HCT116 (cell line): ENCODE measurements at regions of chr15 and their contacts with region 1.

Region 1: DNA sequence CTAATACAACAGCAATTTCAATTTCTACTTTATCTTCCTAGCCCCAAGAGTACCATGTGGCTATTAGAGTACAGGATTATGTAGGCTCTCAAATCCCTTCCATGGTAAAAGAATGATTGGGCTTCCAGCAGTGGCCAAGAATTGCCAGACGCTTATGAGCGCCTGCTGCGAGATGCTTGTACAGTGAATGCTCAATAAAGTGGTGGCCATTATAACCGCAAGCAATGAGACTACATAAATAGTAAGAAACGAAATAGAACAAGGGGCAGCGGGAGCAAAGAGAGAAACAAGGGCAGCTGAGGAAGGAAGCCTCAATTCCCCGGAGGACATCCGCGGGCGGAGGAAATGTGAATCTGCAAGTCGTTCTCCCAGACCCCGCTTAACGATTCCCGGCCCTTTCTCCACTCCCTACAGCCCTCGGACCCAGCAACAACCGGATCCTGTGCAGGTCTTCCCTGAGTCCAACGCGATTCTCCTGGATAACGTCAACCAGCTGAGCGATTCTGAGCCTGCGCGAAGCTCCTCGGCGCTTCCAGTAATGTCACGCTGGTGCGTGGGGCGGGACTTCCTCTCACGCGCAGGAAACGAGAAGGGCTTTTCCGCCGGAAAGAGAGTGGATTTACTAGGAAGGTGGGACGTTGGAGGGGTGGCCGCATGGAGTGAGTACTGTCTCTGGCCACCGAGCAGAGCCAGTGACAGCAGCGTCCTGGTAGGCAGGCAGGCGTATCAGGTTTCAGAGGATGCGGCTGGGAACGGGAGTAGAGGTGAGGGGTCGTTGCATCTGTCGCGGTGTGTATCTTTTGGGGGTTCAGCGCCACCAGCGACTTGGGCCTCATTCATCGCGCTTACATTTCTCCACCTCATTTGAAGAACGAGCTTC is 40.5 kb upstream of the AP3B2 start:
- DNase-seq: peak; percentile 90
- ATAC-seq: peak; percentile 85
- H3K4me3 ChIP-seq: peak overlapping the region; percentile 72 to 74
- H3K27ac ChIP-seq: peak overlapping the region; percentile 69
- H3K4me1 ChIP-seq: peaks cover 12 to 22% of the 10 kb centered on the region in 2 experiments
- H3K27me3 ChIP-seq: no peaks in the 10 kb centered on the region
- CTCF ChIP-seq: no peak
- POLR2A ChIP-seq: no peak
- RAD21 ChIP-seq: no peak

Region 2: DNA sequence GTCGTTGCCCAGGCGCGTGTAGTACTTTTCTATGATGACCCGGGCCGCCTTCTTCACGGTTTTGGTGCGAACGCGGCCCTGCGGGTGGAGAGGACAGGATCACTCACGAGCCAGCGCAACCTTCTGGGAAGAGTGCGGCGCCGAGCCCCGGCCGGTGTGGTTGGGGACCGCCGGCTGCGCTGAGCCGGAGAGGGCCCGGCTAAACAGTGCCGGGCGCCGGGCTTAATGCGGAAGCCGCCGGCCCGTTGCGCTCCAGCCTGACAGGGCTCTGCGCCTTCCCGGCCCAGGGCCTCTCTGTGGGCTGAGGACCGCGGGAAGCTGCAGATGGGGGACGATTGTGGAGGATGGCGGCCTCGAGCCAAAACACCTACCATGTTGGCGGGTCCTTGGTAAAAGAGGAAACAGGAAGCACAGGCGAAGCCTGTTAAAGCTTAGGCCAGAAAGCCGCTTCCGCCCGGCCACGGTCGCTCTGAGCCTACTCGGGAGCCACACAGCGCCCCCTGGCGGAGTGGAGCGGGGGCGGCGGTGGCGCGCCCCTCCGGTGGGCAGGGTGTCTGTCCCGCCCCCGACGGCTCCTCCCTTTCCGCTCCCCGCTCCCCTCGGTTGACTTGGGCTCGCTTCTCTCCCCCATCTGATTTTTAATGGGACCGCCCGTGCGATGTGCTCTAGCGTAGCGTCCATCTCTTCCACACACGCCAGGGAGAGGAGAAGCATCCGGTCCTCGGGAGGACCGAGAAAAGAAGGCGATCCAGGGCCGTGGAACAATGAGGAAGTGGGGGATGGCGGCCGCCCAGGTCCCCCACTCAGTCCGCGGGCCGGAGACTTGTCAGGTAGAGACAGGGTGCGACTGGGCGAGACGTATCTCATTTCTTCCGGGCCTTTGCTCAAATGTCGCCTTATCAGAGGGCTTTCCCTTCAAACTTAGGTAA is 209.9 kb before region 1 on chr15 and contains the start of gene RPS17:
- CTCF ChIA-PET with region 1: no interaction called
- POLR2A ChIA-PET with region 1: interaction called, 15 read pairs
- RAD21 ChIA-PET with region 1: interaction called in 1 of 2 experiments, 4 read pairs
- intact Hi-C with region 1: loop called (anchors 1 kb)
- DNase-seq: peak; percentile 91
- ATAC-seq: peak; percentile 90
- H3K4me3 ChIP-seq: peak within 1 kb of the TSS; percentile 84 to 100
- H3K27ac ChIP-seq: peak within 1 kb of the TSS; percentile 85
- H3K4me1 ChIP-seq: peaks cover 0 to 18% of the 10 kb centered on the region in 2 experiments; a peak in 3 of 4 replicates
- H3K27me3 ChIP-seq: peaks cover 4% of the 10 kb centered on the region; the same call in 1 of the 2 replicates
- CTCF ChIP-seq: peak; percentile 85 to 97 (median 94)
- POLR2A ChIP-seq: peak; percentile 96
- RAD21 ChIP-seq: peak; percentile 39
- total RNA-seq, gene RPS17: 2,385 TPM

Region 3: DNA sequence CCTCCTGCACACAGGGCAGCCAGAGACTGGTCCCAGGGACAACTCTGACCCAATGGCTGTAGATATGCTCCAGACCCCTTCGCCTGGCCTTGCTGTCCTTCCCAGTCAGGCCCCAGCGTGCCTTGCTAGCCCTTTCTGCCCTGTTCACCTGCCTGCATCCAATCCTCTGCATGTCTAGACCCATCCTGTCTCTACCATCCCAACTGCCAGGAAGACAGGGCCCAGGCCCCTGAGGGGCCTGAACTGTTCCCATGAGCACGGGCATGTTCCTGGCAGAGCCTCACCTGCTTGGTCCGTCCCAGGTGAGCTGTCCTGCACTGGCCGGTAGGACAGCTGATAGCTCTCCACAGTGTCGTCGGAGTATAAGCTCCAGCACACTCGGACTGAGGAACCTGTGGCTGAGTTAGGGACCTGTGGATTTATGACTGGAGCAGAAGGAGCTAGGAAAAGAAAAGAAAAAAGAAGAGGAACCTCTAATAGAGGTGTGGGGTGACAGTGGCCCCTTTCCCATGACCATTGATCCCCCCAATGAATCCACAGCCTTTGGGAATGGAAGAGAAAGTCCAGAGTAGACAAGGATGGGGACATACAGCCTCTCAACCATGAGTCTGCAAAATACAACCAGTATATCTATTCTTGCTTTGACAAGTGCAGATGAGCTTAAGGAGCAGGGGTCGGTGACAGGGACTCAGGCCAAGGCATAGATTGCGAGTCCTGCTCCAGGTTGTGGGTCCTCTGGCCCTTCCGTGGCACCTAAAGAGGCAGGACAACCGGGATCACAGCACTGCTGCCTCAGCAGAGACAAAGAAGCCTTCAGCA is 21.8 kb after region 1 on chr15:
- CTCF ChIA-PET with region 1: no interaction called
- POLR2A ChIA-PET with region 1: interaction called, 10 read pairs
- RAD21 ChIA-PET with region 1: no interaction called
- intact Hi-C with region 1: no loop called
- DNase-seq: no peak
- ATAC-seq: no peak
- H3K4me3 ChIP-seq: no peak overlapping the region
- H3K27ac ChIP-seq: no peak overlapping the region
- H3K4me1 ChIP-seq: peaks cover 6 to 20% of the 10 kb centered on the region in 2 experiments
- H3K27me3 ChIP-seq: no peaks in the 10 kb centered on the region
- CTCF ChIP-seq: no peak
- POLR2A ChIP-seq: no peak
- RAD21 ChIP-seq: no peak

Region 4: GRCh38 chr15:82809404-82810060 is 59.3 kb after region 1 on chr15 and contains the start of gene WHAMM:
- CTCF ChIA-PET with region 1: no interaction called
- POLR2A ChIA-PET with region 1: no interaction called
- RAD21 ChIA-PET with region 1: no interaction called
- intact Hi-C with region 1: loop called (anchors 5 kb)
- DNase-seq: peak; percentile 96
- ATAC-seq: peak; percentile 95
- H3K4me3 ChIP-seq: peak within 1 kb of the TSS; percentile 66 to 74
- H3K27ac ChIP-seq: peak within 1 kb of the TSS; percentile 96
- H3K4me1 ChIP-seq: peaks cover 9 to 29% of the 10 kb centered on the region in 2 experiments; a peak in 2 of 4 replicates
- H3K27me3 ChIP-seq: no peaks in the 10 kb centered on the region
- CTCF ChIP-seq: no peak
- POLR2A ChIP-seq: peak; percentile 48
- RAD21 ChIP-seq: no peak
- total RNA-seq, gene WHAMM: 7.1 TPM

Region 5: DNA sequence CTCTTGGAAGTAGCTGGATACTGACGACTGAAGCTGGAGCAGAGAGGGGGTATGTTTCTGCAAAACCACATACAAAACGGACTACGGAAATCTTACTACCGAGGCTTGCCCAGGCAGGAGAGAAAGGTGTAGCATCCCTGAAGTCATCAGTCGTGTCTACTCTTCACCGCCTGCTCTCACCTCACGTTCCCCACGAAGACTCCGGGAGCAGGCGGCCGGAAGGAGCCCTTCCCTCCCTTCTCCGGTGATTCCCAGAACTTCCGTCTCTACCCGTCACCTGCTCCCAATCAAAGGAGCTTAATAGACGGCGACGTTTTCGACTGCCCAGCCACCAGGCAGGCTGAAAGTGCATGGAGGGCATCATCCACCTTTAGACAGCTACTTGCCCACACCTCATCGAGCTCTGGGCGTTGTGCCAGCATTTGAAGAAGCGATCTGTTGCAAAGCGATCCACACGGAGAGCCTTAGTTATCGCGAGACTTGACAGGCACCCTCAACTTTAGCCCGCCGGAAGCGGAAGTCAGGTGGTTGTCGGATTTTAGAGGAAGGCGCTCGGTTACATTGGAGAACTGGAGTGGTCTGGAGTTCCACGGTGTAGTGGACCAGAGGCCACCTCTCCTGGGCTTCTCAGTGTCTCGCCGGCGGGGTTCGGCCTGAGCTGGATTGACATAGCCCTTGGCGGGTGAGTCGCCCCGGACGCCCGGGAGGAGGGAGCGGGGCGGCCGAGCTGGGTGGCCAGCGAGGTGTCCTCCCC is 235.7 kb after region 1 on chr15 and contains the start of gene RAMAC:
- CTCF ChIA-PET with region 1: no interaction called
- POLR2A ChIA-PET with region 1: no interaction called
- RAD21 ChIA-PET with region 1: no interaction called
- intact Hi-C with region 1: loop called (anchors 5 kb)
- DNase-seq: peak; percentile 92
- ATAC-seq: peak; percentile 96
- H3K4me3 ChIP-seq: peak within 1 kb of the TSS; percentile 87 to 99
- H3K27ac ChIP-seq: peak within 1 kb of the TSS; percentile 65
- H3K4me1 ChIP-seq: peaks cover 7 to 17% of the 10 kb centered on the region in 2 experiments
- H3K27me3 ChIP-seq: no peaks in the 10 kb centered on the region
- CTCF ChIP-seq: no peak
- POLR2A ChIP-seq: no peak
- RAD21 ChIP-seq: no peak
- total RNA-seq, gene RAMAC: 16.5 TPM

Region 6: DNA sequence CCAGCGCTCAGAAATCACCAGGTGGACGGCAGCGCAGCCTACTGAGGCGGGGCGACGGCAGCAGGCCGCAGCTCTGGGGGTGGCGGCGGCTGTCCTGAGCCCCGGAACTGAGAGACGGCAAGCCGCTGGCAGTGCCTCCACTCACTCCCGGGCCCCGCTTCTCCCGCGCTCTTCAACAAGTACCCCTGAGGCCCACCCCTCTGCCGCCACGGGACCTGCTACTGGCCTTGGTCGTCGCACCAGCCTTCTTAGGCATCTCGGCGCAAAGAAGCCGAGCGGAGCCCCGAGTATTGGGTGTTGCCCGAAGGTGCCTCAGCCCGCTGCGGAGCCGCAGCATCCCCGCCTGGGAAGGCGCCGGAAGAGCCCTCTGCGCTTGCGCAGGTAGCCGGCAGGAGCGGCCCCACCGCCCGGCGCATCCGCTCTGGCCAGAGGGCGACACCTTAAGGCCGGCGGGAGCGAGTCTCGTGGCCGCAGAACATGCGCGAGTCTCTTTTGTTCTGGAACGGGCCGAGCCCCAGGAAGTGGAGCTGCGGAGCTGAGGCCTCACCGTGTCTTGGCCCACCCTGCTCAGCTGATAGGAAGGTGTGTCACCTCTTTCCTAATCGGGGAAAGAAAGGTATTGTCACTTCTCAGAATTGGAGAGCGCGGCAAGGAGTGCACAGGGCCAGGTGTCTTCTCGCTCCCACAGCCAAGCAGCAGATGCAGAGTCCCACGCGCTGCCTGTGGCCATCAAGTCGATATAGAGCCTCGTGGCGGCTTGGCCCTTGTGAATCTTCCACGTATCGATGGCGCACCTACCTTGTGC is 261.3 kb after region 1 on chr15 and contains the start of gene C15orf40:
- CTCF ChIA-PET with region 1: no interaction called
- POLR2A ChIA-PET with region 1: interaction called, 3 read pairs
- RAD21 ChIA-PET with region 1: no interaction called
- intact Hi-C with region 1: loop called (anchors 5 kb)
- DNase-seq: peak; percentile 76
- ATAC-seq: peak; percentile 90
- H3K4me3 ChIP-seq: peak within 1 kb of the TSS; percentile 87 to 98
- H3K27ac ChIP-seq: peak within 1 kb of the TSS; percentile 63
- H3K4me1 ChIP-seq: peaks cover 7 to 18% of the 10 kb centered on the region in 2 experiments; a peak in 3 of 4 replicates
- H3K27me3 ChIP-seq: no peaks in the 10 kb centered on the region
- CTCF ChIP-seq: peak; percentile 66 to 69 (median 68); a peak in 5 of 6 replicates
- POLR2A ChIP-seq: peak; percentile 39
- RAD21 ChIP-seq: no peak
- total RNA-seq, gene C15orf40: 26.0 TPM

Region 7: DNA sequence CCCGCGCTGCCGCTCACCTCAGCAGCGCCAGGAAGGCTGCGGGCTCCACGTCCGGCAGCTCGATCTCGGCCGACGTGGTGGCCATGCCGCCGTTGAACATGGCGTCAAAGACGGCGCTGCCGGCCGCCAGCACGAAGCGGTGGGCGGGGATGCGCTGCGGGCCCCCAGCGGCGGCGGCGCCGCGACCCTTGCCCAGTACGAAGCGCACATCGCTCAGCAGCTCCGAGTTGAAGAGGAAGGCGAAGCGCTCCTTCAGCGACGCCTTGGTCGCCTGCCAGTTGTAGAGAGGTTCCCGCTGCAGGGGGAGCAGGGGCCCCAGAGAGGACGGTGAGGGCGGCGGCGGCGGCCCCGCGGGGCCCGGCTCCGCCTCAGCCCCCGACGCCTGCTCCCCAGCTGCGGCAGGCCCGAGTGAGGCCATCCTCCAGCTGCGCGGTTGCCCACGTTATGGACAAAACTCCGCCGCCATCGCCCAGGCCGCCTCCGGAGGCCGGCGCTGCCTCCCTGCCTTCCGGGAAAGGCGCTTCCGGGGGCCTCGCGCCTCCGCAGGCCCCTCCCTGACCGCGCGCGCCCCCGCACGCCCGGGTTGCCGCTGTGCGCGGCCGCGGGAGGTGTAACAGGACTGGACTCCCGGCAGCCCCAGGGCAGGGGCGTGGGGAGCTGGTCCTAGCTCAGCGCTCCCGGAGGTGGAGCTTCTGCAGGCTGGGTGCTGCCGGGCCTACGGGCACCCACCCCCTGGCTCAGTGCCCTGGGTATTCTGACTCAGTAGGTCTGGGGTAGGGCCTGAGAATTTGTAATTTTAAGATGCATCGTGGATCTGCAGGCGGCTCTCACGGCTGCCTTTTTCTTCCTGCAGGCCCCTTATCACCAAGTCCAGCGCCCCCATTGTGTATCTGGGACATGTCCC is 316.8 kb after region 1 on chr15 and contains the start of gene BTBD1:
- CTCF ChIA-PET with region 1: no interaction called
- POLR2A ChIA-PET with region 1: no interaction called
- RAD21 ChIA-PET with region 1: no interaction called
- intact Hi-C with region 1: loop called (anchors 5 kb)
- DNase-seq: peak; percentile 87
- ATAC-seq: peak; percentile 97
- H3K4me3 ChIP-seq: peak within 1 kb of the TSS; percentile 66 to 91
- H3K27ac ChIP-seq: peak within 1 kb of the TSS; percentile 97
- H3K4me1 ChIP-seq: peaks cover 9 to 22% of the 10 kb centered on the region in 2 experiments; a peak in 3 of 4 replicates
- H3K27me3 ChIP-seq: no peaks in the 10 kb centered on the region
- CTCF ChIP-seq: no peak
- POLR2A ChIP-seq: peak; percentile 67
- RAD21 ChIP-seq: no peak
- total RNA-seq, gene BTBD1: 80.0 TPM